K562 (cell line): ENCODE measurements at regions of chr1 and their contacts with region 1.

Region 1: DNA sequence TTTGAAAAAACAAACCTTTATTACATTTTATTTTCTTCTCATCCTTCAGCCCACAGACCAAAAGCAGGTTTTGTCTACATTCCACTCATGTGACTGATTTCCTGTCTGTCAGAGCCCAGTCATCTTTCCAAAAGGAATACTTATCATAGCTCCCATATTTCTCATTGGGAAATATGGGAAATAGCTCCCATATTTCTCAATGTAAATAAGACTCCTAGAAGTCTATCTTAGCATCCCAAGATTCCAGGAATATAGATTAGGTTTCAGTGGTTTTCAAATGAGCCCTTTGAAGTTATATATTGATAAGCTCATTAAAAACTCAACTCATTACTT is 19.1 kb upstream of the NRDC start:
- DNase-seq: no peak
- ATAC-seq: no peak
- H3K4me3 ChIP-seq: no peak overlapping the region
- H3K27ac ChIP-seq: no peak overlapping the region
- H3K4me1 ChIP-seq: no peaks in the 10 kb centered on the region; a peak in 1 of 5 replicates
- H3K27me3 ChIP-seq: peaks cover 0 to 20% of the 10 kb centered on the region in 2 experiments; a peak in 3 of 5 replicates
- CTCF ChIP-seq: no peak
- EP300 ChIP-seq: no peak
- POLR2A ChIP-seq: no peak
- RAD21 ChIP-seq: no peak

Region 2: GRCh38 chr1:51170342-51170741 is 727.3 kb before region 1 on chr1:
- CTCF ChIA-PET with region 1: no interaction called
- POLR2A ChIA-PET with region 1: no interaction called
- in situ Hi-C with region 1: no loop called
- intact Hi-C with region 1: no loop called
- DNase-seq: no peak
- ATAC-seq: no peak
- H3K4me3 ChIP-seq: no peak overlapping the region
- H3K27ac ChIP-seq: no peak overlapping the region
- H3K4me1 ChIP-seq: no peaks in the 10 kb centered on the region
- H3K27me3 ChIP-seq: peaks cover 14 to 24% of the 10 kb centered on the region in 2 experiments; a peak in 3 of 5 replicates
- CTCF ChIP-seq: no peak
- EP300 ChIP-seq: no peak
- POLR2A ChIP-seq: no peak
- RAD21 ChIP-seq: no peak

Region 3: GRCh38 chr1:51661081-51661518 is 236.6 kb before region 1 on chr1:
- CTCF ChIA-PET with region 1: no interaction called
- POLR2A ChIA-PET with region 1: no interaction called
- in situ Hi-C with region 1: no loop called
- intact Hi-C with region 1: no loop called
- DNase-seq: peak in 2 of 4 experiments; percentile 34 to 71
- ATAC-seq: peak; percentile 76
- H3K4me3 ChIP-seq: no peak overlapping the region
- H3K27ac ChIP-seq: 0 out of 3 replicates have a peak overlapping the region, but pooled peaks have one; percentile 1
- H3K4me1 ChIP-seq: peaks cover 6 to 17% of the 10 kb centered on the region in 2 experiments; a peak in 3 of 5 replicates
- H3K27me3 ChIP-seq: no peaks in the 10 kb centered on the region
- CTCF ChIP-seq: no peak
- EP300 ChIP-seq: peak; percentile 39; the same call in 1 of the 2 replicates
- POLR2A ChIP-seq: no peak
- RAD21 ChIP-seq: 0 out of 4 replicates have a peak, but pooled peaks of 1 of the 2 experiments have one; percentile 10

Region 4: GRCh38 chr1:51926171-51926812 is 28.6 kb after region 1 on chr1:
- CTCF ChIA-PET with region 1: interaction called, 4 read pairs
- POLR2A ChIA-PET with region 1: no interaction called
- in situ Hi-C with region 1: no loop called
- intact Hi-C with region 1: loop called (anchors 1 kb)
- DNase-seq: peak; percentile 32 to 57 (median 43)
- ATAC-seq: peak; percentile 90
- H3K4me3 ChIP-seq: no peak overlapping the region
- H3K27ac ChIP-seq: no peak overlapping the region
- H3K4me1 ChIP-seq: no peaks in the 10 kb centered on the region
- H3K27me3 ChIP-seq: peaks cover 21 to 38% of the 10 kb centered on the region in 2 experiments
- CTCF ChIP-seq: peak; percentile 55 to 73 (median 70)
- EP300 ChIP-seq: no peak
- POLR2A ChIP-seq: no peak
- RAD21 ChIP-seq: peak; percentile 52 to 82

Region 5: GRCh38 chr1:51936531-51936930 is 38.9 kb after region 1 on chr1:
- CTCF ChIA-PET with region 1: no interaction called
- POLR2A ChIA-PET with region 1: no interaction called
- in situ Hi-C with region 1: no loop called
- intact Hi-C with region 1: no loop called
- DNase-seq: peak in 1 of 4 experiments; percentile 39
- ATAC-seq: peak; percentile 86
- H3K4me3 ChIP-seq: no peak overlapping the region
- H3K27ac ChIP-seq: no peak overlapping the region
- H3K4me1 ChIP-seq: no peaks in the 10 kb centered on the region
- H3K27me3 ChIP-seq: no peaks in the 10 kb centered on the region
- CTCF ChIP-seq: peak; percentile 40 to 43 (median 43)
- EP300 ChIP-seq: no peak
- POLR2A ChIP-seq: no peak
- RAD21 ChIP-seq: peak in 1 of 2 experiments; percentile 41; a peak in 2 of 4 replicates

Region 6: DNA sequence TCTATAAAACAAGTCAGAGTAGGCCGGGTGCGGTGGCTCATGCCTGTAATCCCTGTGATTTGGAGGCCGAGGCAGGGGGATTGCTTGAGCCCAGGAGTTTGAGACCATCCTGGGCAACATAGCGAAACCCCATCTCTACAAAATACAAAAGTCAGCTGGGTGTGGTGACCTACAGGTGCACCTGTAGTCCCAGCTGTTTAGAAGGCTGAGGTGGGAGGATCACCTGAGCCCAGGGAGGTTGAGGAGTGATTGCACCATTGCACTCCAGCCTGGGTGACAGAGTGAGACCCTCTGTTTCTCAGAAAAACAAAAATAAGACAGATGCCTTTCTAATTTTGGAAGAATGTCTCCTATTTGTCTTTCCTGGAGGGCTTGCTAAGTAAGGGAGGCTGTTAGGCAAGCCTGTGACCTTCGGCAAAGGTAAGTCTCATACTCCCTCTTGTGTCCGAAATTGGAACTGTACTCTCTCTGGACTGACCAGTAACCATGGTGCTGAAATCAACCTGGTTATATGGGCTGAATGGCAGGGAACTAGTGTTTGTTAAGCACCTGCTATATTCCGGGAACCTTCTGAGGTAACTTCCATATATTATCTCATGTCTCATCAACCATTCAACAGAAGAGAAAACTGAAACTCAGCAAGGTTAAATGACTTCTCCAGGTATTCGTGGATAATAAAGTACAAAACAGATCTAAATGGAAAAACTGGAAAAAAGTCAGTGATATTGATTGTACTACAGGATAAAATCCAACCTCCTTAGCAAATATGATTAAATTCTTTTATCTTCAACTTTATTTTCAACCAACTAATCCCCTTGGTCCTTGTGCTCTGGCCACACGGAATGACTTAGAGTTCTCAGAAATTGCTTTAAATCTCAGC is 104.6 kb after region 1 on chr1:
- CTCF ChIA-PET with region 1: interaction called, 61 read pairs
- POLR2A ChIA-PET with region 1: no interaction called
- in situ Hi-C with region 1: loop called (anchors 5 kb)
- intact Hi-C with region 1: loop called (anchors 1 kb)
- DNase-seq: peak; percentile 89 to 91 (median 89)
- ATAC-seq: peak; percentile 96
- H3K4me3 ChIP-seq: no peak overlapping the region
- H3K27ac ChIP-seq: no peak overlapping the region
- H3K4me1 ChIP-seq: peaks cover 0 to 7% of the 10 kb centered on the region in 2 experiments; a peak in 4 of 5 replicates
- H3K27me3 ChIP-seq: peaks cover 0 to 3% of the 10 kb centered on the region in 2 experiments; a peak in 2 of 5 replicates
- CTCF ChIP-seq: peak; percentile 86 to 98 (median 94)
- EP300 ChIP-seq: no peak
- POLR2A ChIP-seq: no peak
- RAD21 ChIP-seq: peak; percentile 98 to 99

Region 7: DNA sequence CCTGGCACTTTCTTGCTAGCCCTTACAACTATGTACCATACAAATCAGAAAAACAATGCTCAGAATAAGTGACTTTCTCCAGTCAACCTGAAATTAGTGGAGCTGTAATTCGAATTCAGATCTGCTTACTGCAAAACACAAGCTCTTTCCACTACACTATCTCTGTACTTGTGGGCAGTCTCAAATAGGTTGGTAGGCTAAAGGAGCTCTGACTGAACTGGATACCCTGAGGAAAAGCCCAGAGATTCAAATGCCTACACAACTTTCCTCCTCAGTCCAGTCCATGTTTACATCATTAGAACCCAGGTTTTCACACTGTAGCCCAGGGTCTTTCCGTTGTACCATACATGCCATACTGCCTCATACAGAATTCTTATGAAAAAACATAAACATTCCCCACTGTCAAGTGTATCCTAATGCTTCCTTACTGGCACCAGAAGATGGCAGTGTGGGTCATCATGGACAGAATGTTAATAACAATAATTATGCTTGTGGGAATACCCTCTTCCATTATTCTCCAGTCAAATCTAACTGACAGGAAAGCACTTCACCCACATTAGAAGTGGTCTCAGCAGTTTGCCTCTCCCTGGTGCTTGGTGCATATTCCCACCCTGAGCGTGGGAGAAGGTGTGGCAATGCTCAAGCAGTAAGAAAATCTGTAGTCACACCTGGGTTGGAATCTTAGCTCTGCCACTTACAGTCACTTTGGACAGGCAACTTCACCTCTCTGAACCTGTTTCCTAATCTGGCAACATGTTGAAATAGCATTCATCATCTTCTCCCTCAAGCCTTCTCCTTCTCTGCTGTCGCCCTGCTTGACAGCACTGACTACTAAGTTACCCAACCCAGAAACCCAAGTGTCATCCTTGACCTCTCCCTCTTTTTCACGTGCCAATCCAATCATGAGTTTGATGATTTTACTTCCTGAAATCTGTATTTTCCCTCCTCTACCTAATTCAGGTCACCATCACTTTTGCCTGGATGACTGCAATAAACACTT is 229.8 kb after region 1 on chr1:
- CTCF ChIA-PET with region 1: no interaction called
- POLR2A ChIA-PET with region 1: no interaction called
- in situ Hi-C with region 1: no loop called
- intact Hi-C with region 1: loop called (anchors 5 kb)
- DNase-seq: peak in 2 of 4 experiments; percentile 47 to 67
- ATAC-seq: peak; percentile 93
- H3K4me3 ChIP-seq: no peak overlapping the region
- H3K27ac ChIP-seq: no peak overlapping the region
- H3K4me1 ChIP-seq: no peaks in the 10 kb centered on the region
- H3K27me3 ChIP-seq: peaks cover 0 to 3% of the 10 kb centered on the region in 2 experiments; a peak in 4 of 5 replicates
- CTCF ChIP-seq: peak; percentile 58 to 87 (median 75); a peak in 5 of 6 replicates
- EP300 ChIP-seq: no peak
- POLR2A ChIP-seq: no peak
- RAD21 ChIP-seq: peak; percentile 81 to 92

Region 8: DNA sequence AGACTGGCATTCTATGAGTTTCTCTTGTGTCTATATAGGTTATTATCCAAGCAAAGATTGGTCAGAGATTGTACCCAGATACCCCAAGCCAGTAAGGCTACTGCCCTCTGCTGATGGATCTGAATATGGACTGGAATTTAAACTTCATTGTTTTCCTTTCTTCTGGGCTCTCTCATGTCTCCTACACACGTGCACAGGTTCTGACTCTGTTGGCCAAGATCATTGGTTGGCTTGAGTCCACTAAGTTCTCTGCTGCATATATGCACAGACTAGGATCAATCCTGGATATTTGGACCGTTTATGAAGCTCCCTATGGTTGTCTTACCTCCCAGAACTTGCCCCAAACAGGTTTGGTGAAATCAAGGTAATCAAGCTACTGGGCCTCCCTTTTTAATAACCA is 398.7 kb after region 1 on chr1:
- CTCF ChIA-PET with region 1: interaction called, 5 read pairs
- POLR2A ChIA-PET with region 1: no interaction called
- in situ Hi-C with region 1: no loop called
- intact Hi-C with region 1: loop called (anchors 5 kb)
- DNase-seq: peak; percentile 48 to 73 (median 59)
- ATAC-seq: peak; percentile 96
- H3K4me3 ChIP-seq: no peak overlapping the region
- H3K27ac ChIP-seq: no peak overlapping the region
- H3K4me1 ChIP-seq: no peaks in the 10 kb centered on the region
- H3K27me3 ChIP-seq: no peaks in the 10 kb centered on the region
- CTCF ChIP-seq: peak; percentile 79 to 96 (median 80)
- EP300 ChIP-seq: no peak
- POLR2A ChIP-seq: no peak
- RAD21 ChIP-seq: peak; percentile 95 to 98

Region 9: DNA sequence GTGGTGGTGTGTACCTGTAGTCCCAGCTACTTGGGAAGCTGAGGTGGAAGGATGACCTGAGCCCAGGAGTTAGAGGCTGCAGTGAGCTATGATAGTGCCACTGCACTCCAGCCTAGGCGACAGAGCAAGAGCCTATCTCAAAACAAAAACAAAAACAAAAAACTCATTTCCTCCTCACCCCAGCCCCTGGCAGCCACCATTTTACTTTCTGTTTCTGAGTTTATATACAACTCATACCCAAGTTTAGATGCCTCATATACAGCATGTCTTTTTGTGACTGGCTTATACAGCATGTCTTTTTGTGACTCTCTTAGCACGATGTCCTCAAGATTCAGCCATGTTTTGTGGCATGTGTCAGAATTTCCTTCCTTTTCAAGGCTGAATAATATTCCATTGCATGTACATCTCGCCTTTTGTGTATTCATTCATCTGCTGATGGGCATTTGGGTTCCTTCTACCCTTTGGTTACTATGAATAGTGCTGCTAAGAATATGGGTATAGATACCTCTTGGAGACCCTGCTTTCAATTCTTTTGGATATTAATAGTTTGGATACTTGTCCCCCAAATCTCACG is 785.8 kb after region 1 on chr1:
- CTCF ChIA-PET with region 1: interaction called, 5 read pairs
- POLR2A ChIA-PET with region 1: no interaction called
- in situ Hi-C with region 1: no loop called
- intact Hi-C with region 1: loop called (anchors 5 kb)
- DNase-seq: no peak
- ATAC-seq: no peak
- H3K4me3 ChIP-seq: no peak overlapping the region
- H3K27ac ChIP-seq: no peak overlapping the region
- H3K4me1 ChIP-seq: no peaks in the 10 kb centered on the region; a peak in 1 of 5 replicates
- H3K27me3 ChIP-seq: no peaks in the 10 kb centered on the region; a peak in 1 of 5 replicates
- CTCF ChIP-seq: no peak
- EP300 ChIP-seq: no peak
- POLR2A ChIP-seq: peak; percentile 45; the same call in 1 of the 2 replicates
- RAD21 ChIP-seq: no peak